ENCODE measurements at regions of chr11 and their contacts with region 1.

Region 1: DNA sequence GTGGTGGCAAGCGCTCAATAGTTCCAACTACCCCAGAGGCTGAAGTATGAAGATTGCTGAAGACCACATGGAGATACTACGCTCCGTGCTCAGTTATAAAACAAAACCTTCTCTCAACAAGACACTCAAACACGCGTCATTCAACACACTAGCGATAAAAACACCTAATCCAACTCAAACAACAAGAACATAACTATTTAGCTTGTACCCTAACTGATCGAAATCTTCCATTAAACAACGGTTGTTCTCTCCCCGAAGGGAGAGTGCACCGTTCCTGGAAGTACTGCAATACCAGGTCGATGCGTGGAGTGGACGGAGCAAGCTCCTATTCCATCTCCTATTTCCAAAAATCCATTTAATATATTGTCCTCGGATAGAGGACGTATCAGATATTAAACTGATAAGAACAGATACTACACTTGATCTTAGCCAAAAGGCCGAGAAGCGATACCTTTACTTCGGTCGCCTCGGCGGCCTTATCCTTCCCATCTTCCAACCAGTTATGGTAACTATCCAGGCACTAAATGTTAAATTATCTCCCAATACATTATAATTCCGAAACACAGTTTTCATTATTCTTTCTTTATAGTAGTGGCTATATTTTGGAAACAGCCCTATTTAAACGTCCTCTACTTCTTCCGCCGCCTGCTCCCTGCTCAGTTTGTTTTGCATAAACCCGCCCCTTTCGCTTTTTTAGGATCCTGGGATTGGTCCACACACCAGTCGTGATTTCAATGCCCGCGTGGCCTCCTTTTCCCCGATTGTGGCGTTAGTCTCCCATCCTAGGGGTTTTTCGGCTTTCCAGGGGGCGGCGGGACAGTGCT is 2.2 kb upstream of the WDR74 start:
- DNase-seq: peak; percentile 79
- ATAC-seq: peak; percentile 72
- H3K4me3 Mint-ChIP-seq: no peak overlapping the region
- H3K27ac Mint-ChIP-seq: no peak overlapping the region
- H3K4me1 Mint-ChIP-seq: peaks cover 28% of the 10 kb centered on the region
- H3K27me3 Mint-ChIP-seq: no peaks in the 10 kb centered on the region
- CTCF ChIP-seq: no peak

Region 2: GRCh38 chr11:62573592-62574362 is 267.8 kb before region 1 on chr11 and contains the start of gene EEF1G:
- CTCF ChIA-PET with region 1: no interaction called
- POLR2A ChIA-PET with region 1: interaction called, 31 read pairs
- intact Hi-C with region 1: no loop called
- DNase-seq: peak; percentile 92
- ATAC-seq: peak; percentile 94
- H3K4me3 Mint-ChIP-seq: peak within 1 kb of the TSS; percentile 97
- H3K27ac Mint-ChIP-seq: peak within 1 kb of the TSS; percentile 94
- H3K4me1 Mint-ChIP-seq: peaks cover 51% of the 10 kb centered on the region
- H3K27me3 Mint-ChIP-seq: no peaks in the 10 kb centered on the region
- CTCF ChIP-seq: no peak
- total RNA-seq, gene EEF1G: 2,373 and 2,524 TPM in 2 replicates

Region 3: GRCh38 chr11:62645956-62646824 is 195.4 kb before region 1 on chr11 and contains the start of gene GANAB:
- CTCF ChIA-PET with region 1: no interaction called
- POLR2A ChIA-PET with region 1: interaction called, 23 read pairs
- intact Hi-C with region 1: no loop called
- DNase-seq: peak; percentile 89
- ATAC-seq: peak; percentile 99
- H3K4me3 Mint-ChIP-seq: peak within 1 kb of the TSS; percentile 93
- H3K27ac Mint-ChIP-seq: peak within 1 kb of the TSS; percentile 86
- H3K4me1 Mint-ChIP-seq: peaks cover 34% of the 10 kb centered on the region
- H3K27me3 Mint-ChIP-seq: no peaks in the 10 kb centered on the region
- CTCF ChIP-seq: no peak
- total RNA-seq, gene GANAB: 187 and 189 TPM in 2 replicates

Region 4: GRCh38 chr11:62678770-62679696 is 162.5 kb before region 1 on chr11 and contains the start of gene UBXN1:
- CTCF ChIA-PET with region 1: no interaction called
- POLR2A ChIA-PET with region 1: interaction called, 54 read pairs
- intact Hi-C with region 1: loop called (anchors 5 kb)
- DNase-seq: peak; percentile 77
- ATAC-seq: peak; percentile 74
- H3K4me3 Mint-ChIP-seq: peak within 1 kb of the TSS; percentile 91
- H3K27ac Mint-ChIP-seq: peak within 1 kb of the TSS; percentile 96
- H3K4me1 Mint-ChIP-seq: peaks cover 41% of the 10 kb centered on the region
- H3K27me3 Mint-ChIP-seq: no peaks in the 10 kb centered on the region
- CTCF ChIP-seq: no peak
- total RNA-seq, gene UBXN1: 204 and 205 TPM in 2 replicates

Region 5: GRCh38 chr11:62771144-62772021 is 70.2 kb before region 1 on chr11 and contains the start of gene TAF6L:
- CTCF ChIA-PET with region 1: no interaction called
- POLR2A ChIA-PET with region 1: interaction called, 56 read pairs
- intact Hi-C with region 1: loop called (anchors 1 kb)
- DNase-seq: peak; percentile 81
- ATAC-seq: peak; percentile 88
- H3K4me3 Mint-ChIP-seq: peak within 1 kb of the TSS; percentile 92
- H3K27ac Mint-ChIP-seq: peak within 1 kb of the TSS; percentile 94
- H3K4me1 Mint-ChIP-seq: peaks cover 28% of the 10 kb centered on the region
- H3K27me3 Mint-ChIP-seq: no peaks in the 10 kb centered on the region
- CTCF ChIP-seq: no peak
- total RNA-seq, gene TAF6L: 32.9 and 38.6 TPM in 2 replicates

Region 6: DNA sequence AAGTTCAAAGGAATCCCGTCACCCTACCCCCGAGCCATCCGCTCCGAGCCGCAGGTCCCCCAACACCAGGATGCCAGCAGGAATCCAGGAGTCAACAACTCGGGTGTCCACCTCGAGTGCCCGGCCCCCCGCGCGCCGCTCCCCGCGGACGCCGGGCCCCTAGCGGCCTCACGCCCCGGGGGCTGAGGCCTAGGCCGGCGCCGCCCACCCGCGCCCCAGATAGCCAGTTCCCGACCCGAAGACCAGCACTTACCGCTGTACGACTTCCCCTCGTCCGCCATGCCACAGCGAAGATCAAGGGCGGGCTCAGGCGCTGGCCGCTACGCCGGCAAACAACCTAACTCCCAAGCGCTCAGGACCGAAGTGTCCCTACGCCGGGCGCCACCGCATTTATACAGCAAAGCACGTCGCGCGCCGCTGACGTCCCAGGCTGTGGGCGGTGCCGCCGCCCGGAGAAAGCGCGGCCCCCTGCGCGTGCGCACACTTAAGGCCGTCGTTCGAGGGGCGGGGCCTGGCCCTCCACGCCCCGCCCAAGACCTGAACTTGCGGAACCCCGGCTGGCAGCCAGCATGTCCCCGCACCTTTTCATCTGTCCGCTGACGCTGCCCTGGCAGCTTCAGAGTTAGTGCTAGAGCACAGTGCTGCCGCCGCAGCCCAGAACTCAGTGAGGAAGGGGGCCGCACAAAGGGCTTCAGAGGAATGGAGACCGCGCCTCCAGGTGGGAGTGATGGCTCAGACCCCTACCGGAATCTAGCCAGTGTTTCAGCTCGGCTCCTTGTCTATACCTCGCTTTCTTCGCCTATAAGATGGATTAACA is 36.3 kb before region 1 on chr11 and contains the start of gene NXF1:
- CTCF ChIA-PET with region 1: no interaction called
- POLR2A ChIA-PET with region 1: interaction called, 123 read pairs
- intact Hi-C with region 1: loop called (anchors 1 kb)
- DNase-seq: peak; percentile 99
- ATAC-seq: peak; percentile 86
- H3K4me3 Mint-ChIP-seq: peak within 1 kb of the TSS; percentile 96
- H3K27ac Mint-ChIP-seq: peak within 1 kb of the TSS; percentile 93
- H3K4me1 Mint-ChIP-seq: peaks cover 36% of the 10 kb centered on the region
- H3K27me3 Mint-ChIP-seq: no peaks in the 10 kb centered on the region
- CTCF ChIP-seq: no peak
- total RNA-seq, gene NXF1: 89.1 and 91.6 TPM in 2 replicates

Measured in activated B cell treated with CpG ODN at 0.5 μM for 24 hours (primary cell).